PC-3 (cell line): ENCODE measurements at regions of chr9 and their contacts with region 1.

Region 1: DNA sequence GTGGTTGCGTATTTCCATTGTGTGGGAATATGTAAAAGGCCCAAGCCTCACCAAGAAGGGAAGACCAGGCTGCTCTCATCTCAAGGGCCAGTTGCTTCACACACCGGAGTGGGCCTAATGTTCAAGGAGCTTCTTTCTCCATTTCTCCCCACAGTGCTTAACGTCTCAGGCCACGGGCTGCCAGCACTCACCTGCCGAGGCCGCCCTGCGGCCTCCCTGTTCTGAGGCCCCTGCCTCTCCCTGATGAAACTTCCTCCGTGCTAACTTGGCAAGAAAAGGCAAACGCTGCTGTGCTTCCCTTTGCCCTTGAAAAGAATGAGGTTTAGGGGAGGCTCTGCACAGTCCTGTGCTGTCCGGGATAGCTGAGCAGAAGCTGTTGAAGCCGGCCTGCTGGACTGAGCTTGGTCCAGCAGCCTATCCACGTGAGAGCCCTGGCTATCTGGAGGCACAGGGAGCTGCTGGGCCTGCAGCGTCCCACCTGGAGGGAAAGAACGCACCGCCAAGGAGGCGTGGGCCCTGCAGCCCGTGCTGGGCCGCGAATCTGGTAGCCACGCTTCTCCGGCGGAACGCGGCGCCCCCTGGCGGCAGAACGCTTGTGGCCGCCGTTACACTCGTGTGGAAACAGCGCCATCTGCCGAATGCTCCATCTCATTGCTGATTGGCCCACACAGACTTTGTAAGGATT is 73.5 kb upstream of the PRSS3 start:
- DNase-seq: peak; percentile 84
- ATAC-seq: peak; percentile 84
- H3K4me3 ChIP-seq: no peak overlapping the region
- H3K27ac ChIP-seq: no peak overlapping the region
- H3K4me1 ChIP-seq: no peaks in the 10 kb centered on the region
- H3K27me3 ChIP-seq: no peaks in the 10 kb centered on the region
- CTCF ChIP-seq: peak; percentile 97

Region 2: GRCh38 chr9:33517373-33517772 is 204.4 kb before region 1 on chr9:
- CTCF ChIA-PET with region 1: no interaction called
- POLR2A ChIA-PET with region 1: no interaction called
- intact Hi-C with region 1: loop called (anchors 2 kb)
- DNase-seq: peak; percentile 57
- ATAC-seq: peak; percentile 71
- H3K4me3 ChIP-seq: no peak overlapping the region
- H3K27ac ChIP-seq: no peak overlapping the region
- H3K4me1 ChIP-seq: peaks cover 3% of the 10 kb centered on the region; the same call in 1 of the 2 replicates
- H3K27me3 ChIP-seq: no peaks in the 10 kb centered on the region
- CTCF ChIP-seq: peak; percentile 62

Region 3: GRCh38 chr9:33623658-33624586 is 97.9 kb before region 1 on chr9:
- CTCF ChIA-PET with region 1: interaction called, 13 read pairs
- POLR2A ChIA-PET with region 1: no interaction called
- intact Hi-C with region 1: loop called (anchors 1 kb)
- DNase-seq: peak; percentile 88
- ATAC-seq: peak; percentile 86
- H3K4me3 ChIP-seq: no peak overlapping the region
- H3K27ac ChIP-seq: no peak overlapping the region
- H3K4me1 ChIP-seq: peaks cover 24% of the 10 kb centered on the region
- H3K27me3 ChIP-seq: no peaks in the 10 kb centered on the region
- CTCF ChIP-seq: peak; percentile 73

Region 4: GRCh38 chr9:33762343-33762742 is 40.5 kb after region 1 on chr9:
- CTCF ChIA-PET with region 1: no interaction called
- POLR2A ChIA-PET with region 1: no interaction called
- intact Hi-C with region 1: no loop called
- DNase-seq: peak; percentile 79
- ATAC-seq: peak; percentile 39
- H3K4me3 ChIP-seq: peak overlapping the region; percentile 11; the same call in 1 of the 2 replicates
- H3K27ac ChIP-seq: peak overlapping the region; percentile 99
- H3K4me1 ChIP-seq: peaks cover 87% of the 10 kb centered on the region
- H3K27me3 ChIP-seq: no peaks in the 10 kb centered on the region
- CTCF ChIP-seq: no peak